CD4-positive, alpha-beta T cell (primary cell): ENCODE measurements at regions of chr9 and their contacts with region 1.

Region 1: GRCh38 chr9:26356491-26356890 is 536.1 kb downstream of the CAAP1 start:
- DNase-seq: no peak
- ATAC-seq: no peak
- H3K4me3 ChIP-seq: no peak overlapping the region
- H3K4me3 Mint-ChIP-seq: no peak overlapping the region
- H3K27ac ChIP-seq: no peak overlapping the region
- H3K27ac Mint-ChIP-seq: no peak overlapping the region
- H3K4me1 ChIP-seq: no peaks in the 10 kb centered on the region
- H3K4me1 Mint-ChIP-seq: no peaks in the 10 kb centered on the region
- H3K27me3 ChIP-seq: no peaks in the 10 kb centered on the region
- H3K27me3 Mint-ChIP-seq: no peaks in the 10 kb centered on the region
- CTCF ChIP-seq: no peak

Region 2: DNA sequence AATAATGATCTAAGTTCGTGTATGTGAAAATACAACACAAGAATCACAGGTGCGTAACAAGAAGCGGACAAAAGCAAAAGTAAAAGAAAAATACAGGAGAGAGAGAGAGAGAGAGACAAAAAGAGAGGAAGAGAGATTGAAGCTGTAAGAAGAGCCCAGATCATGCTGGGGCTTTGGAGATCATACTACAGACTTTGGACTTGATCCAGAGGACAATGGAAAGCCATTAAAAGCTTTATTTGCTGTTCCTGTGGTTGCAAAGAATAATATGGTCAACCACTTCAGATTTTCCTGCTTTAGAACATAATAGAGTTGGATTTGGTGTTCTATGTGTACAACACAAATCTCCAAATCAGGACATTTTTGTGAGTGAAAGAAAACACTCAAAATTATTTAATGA is 25.3 kb before region 1 on chr9:
- CTCF ChIA-PET with region 1: no interaction called
- POLR2A ChIA-PET with region 1: no interaction called
- intact Hi-C with region 1: no loop called
- DNase-seq: no peak
- ATAC-seq: no peak
- H3K4me3 ChIP-seq: no peak overlapping the region
- H3K4me3 Mint-ChIP-seq: no peak overlapping the region
- H3K27ac ChIP-seq: no peak overlapping the region
- H3K27ac Mint-ChIP-seq: no peak overlapping the region
- H3K4me1 ChIP-seq: no peaks in the 10 kb centered on the region
- H3K4me1 Mint-ChIP-seq: no peaks in the 10 kb centered on the region
- H3K27me3 ChIP-seq: no peaks in the 10 kb centered on the region
- H3K27me3 Mint-ChIP-seq: no peaks in the 10 kb centered on the region
- CTCF ChIP-seq: no peak

Region 3: GRCh38 chr9:26341545-26341944 is 14.9 kb before region 1 on chr9:
- CTCF ChIA-PET with region 1: no interaction called
- POLR2A ChIA-PET with region 1: no interaction called
- intact Hi-C with region 1: loop called in 1 of 2 experiments (anchors 1 kb)
- DNase-seq: no peak
- ATAC-seq: no peak
- H3K4me3 ChIP-seq: no peak overlapping the region
- H3K4me3 Mint-ChIP-seq: no peak overlapping the region
- H3K27ac ChIP-seq: no peak overlapping the region
- H3K27ac Mint-ChIP-seq: no peak overlapping the region
- H3K4me1 ChIP-seq: no peaks in the 10 kb centered on the region
- H3K4me1 Mint-ChIP-seq: no peaks in the 10 kb centered on the region
- H3K27me3 ChIP-seq: no peaks in the 10 kb centered on the region
- H3K27me3 Mint-ChIP-seq: no peaks in the 10 kb centered on the region
- CTCF ChIP-seq: no peak

Region 4: DNA sequence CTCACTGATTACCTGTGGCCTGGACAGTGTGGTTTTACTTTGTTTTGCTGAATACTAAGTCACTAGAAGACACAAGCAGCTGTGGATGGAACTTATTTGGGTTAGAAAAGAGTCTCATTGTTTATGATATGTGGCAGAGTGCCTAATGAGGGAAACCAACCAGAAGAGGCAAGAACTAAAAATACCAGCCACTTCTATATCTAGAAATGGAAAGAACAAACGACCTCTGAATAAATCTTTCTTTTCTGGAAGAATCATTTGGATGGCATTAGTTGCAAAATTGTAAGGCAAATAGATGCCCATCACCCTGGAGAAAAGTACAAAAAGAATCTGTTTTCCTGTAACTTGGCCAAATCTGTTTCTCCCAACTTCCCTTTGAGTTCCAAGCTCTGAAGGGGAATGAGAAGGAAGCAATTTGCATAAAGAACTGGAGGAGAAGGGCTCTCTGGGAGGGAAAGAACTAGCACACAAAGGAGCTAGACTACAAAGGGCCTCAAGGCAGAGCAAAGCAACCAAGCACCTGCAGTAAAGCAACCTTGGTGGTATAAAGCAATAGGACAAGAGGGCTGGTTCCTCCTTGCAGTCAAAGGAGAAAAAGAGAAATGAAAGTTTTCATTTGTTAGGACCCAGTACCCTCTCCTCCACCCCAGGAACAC is 80.7 kb after region 1 on chr9:
- CTCF ChIA-PET with region 1: no interaction called
- POLR2A ChIA-PET with region 1: no interaction called
- intact Hi-C with region 1: no loop called
- DNase-seq: no peak
- ATAC-seq: no peak
- H3K4me3 ChIP-seq: no peak overlapping the region
- H3K4me3 Mint-ChIP-seq: no peak overlapping the region
- H3K27ac ChIP-seq: no peak overlapping the region
- H3K27ac Mint-ChIP-seq: no peak overlapping the region
- H3K4me1 ChIP-seq: no peaks in the 10 kb centered on the region
- H3K4me1 Mint-ChIP-seq: no peaks in the 10 kb centered on the region
- H3K27me3 ChIP-seq: no peaks in the 10 kb centered on the region
- H3K27me3 Mint-ChIP-seq: no peaks in the 10 kb centered on the region
- CTCF ChIP-seq: no peak

Region 5: GRCh38 chr9:27586304-27586703 is 1229.8 kb after region 1 on chr9:
- CTCF ChIA-PET with region 1: no interaction called
- POLR2A ChIA-PET with region 1: no interaction called
- intact Hi-C with region 1: no loop called
- DNase-seq: no peak
- ATAC-seq: no peak
- H3K4me3 ChIP-seq: no peak overlapping the region
- H3K4me3 Mint-ChIP-seq: no peak overlapping the region
- H3K27ac ChIP-seq: no peak overlapping the region
- H3K27ac Mint-ChIP-seq: no peak overlapping the region
- H3K4me1 ChIP-seq: no peaks in the 10 kb centered on the region
- H3K4me1 Mint-ChIP-seq: no peaks in the 10 kb centered on the region
- H3K27me3 ChIP-seq: peaks cover 7 to 38% of the 10 kb centered on the region in 2 experiments
- H3K27me3 Mint-ChIP-seq: peaks cover 59% of the 10 kb centered on the region
- CTCF ChIP-seq: no peak